Activated CD4-positive, alpha-beta memory T cell treated with anti-CD3 and anti-CD28 coated beads for 36 hours (primary cell): ENCODE measurements at regions of chr16 and their contacts with region 1.

Region 1: DNA sequence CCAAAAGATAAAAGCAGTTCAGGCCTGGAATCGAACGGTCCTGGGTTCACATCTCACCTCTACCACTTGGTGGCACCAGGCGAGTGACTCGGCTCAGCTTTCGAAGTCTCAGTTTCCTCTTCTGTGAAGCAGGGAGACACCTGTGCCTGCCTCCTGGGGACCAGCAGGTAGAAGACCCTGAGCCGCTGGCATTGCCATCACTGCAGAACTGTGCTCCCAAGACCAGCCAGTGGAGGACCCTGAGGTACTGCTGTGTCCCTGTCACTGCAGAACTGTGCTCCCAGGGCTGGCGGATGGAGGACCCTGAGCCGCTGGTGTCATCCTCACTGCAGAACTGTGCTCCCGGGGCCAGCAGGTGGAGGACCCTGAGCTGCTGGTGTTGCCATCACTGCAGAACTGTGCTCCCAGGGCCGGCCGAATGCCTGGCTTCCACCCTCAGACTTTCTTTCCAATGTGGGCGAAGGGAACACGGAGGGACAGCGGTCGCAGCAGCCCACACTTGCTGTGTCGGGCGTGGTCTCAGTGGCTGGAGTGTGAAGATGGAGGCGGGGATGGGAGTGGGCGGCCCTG is 8.7 kb upstream of the SLC7A5 start:
- DNase-seq: peak; percentile 68
- H3K4me3 Mint-ChIP-seq: no peak overlapping the region
- H3K27ac Mint-ChIP-seq: no peak overlapping the region
- H3K4me1 Mint-ChIP-seq: peaks cover 39% of the 10 kb centered on the region
- H3K27me3 Mint-ChIP-seq: peaks cover 2% of the 10 kb centered on the region

Region 2: DNA sequence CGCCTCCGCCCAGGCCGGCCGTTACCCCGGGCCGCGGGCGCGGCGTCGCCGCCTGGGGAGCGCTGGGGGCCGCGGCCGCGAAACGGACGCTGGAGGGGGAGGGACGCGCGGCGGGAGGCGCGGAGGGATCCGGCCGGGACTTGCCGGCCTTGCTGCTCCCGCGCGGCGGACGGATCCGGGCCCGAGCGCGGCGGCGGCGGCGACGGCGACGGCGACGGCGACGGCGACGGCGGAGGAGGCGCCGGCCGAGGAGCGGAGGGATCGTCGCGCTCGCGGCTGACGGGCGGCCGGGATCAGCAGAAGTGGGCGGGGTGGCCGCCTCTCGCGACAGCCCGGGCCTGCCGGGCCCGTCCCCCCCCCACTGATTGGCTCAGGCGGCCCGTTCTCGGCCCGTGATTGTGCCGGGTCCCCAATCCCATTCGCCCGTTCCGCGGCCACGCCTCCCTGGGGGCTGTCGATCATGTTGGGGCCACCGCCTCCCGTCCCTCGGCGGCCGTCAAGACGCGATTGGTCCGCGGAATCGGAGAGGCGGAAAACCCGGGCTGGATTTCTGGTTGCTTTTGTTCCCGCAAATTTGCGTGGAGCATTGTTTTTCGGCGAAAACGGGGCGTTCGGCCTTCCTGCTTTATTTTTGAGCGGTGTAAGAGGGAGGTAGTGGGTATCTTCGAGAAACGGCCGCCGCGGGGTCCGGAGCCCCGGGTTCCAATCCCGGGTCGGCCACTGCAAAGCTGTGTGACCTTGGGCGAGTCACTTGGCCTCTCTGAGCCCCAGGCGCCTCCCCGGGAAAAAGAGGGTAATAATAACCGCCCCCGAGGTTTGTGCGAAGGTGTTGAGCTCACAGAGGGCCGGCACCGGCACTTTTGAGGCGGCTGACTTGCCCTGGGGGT is 385.1 kb before region 1 on chr16 and contains the start of gene ZCCHC14:
- CTCF ChIA-PET with region 1: no interaction called
- POLR2A ChIA-PET with region 1: no interaction called
- intact Hi-C with region 1: loop called (anchors 10 kb)
- DNase-seq: peak; percentile 100
- H3K4me3 Mint-ChIP-seq: peak within 1 kb of the TSS; percentile 74
- H3K27ac Mint-ChIP-seq: peak within 1 kb of the TSS; percentile 55
- H3K4me1 Mint-ChIP-seq: peaks cover 48% of the 10 kb centered on the region
- H3K27me3 Mint-ChIP-seq: no peaks in the 10 kb centered on the region
- total RNA-seq, gene ZCCHC14: 8.7 to 10.6 TPM

Region 3: DNA sequence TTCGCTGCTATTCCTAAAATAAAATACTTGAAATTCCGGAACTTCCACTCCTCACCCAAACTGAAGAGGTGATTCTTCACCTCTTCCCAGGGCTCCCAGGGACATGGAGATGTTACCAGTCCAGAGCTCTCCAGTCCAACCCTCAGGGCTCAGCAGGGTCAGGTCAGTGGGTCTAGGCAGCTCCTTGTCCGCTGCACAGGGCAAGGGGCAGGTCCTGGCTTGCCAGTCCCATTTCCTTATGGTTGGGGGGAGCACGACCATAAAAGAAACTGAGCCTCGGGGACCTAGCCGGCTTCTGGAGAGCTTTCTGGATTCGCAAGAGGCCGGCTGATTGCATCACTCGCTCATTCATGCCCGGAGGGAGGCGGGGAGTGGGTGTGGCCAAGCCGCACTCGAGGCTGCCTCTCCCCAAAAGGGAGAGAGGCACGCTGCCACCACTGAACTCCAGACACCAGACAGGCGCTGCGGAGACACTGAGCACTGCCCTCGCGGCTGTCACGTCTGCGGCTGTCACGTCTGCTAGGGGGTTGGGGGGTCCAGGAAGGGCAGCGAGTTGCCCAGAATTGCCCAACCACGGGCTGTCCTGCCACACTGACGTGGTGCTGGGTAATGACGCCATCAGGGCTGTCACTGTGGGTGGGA is 24.5 kb before region 1 on chr16:
- CTCF ChIA-PET with region 1: interaction called, 224 read pairs
- POLR2A ChIA-PET with region 1: interaction called, 6 read pairs
- intact Hi-C with region 1: no loop called
- DNase-seq: peak; percentile 95
- H3K4me3 Mint-ChIP-seq: peak overlapping the region; percentile 53
- H3K27ac Mint-ChIP-seq: peak overlapping the region; percentile 88
- H3K4me1 Mint-ChIP-seq: peaks cover 60% of the 10 kb centered on the region
- H3K27me3 Mint-ChIP-seq: no peaks in the 10 kb centered on the region

Region 4: GRCh38 chr16:87895641-87896141 is 17.7 kb after region 1 on chr16:
- CTCF ChIA-PET with region 1: interaction called, 44 read pairs
- POLR2A ChIA-PET with region 1: interaction called, 65 read pairs
- intact Hi-C with region 1: loop called (anchors 1 kb)
- DNase-seq: peak; percentile 96
- H3K4me3 Mint-ChIP-seq: peak overlapping the region; percentile 58
- H3K27ac Mint-ChIP-seq: peak overlapping the region; percentile 99
- H3K4me1 Mint-ChIP-seq: peaks cover 51% of the 10 kb centered on the region
- H3K27me3 Mint-ChIP-seq: no peaks in the 10 kb centered on the region

Region 5: GRCh38 chr16:88452482-88453216 is 574.6 kb after region 1 on chr16:
- CTCF ChIA-PET with region 1: no interaction called
- POLR2A ChIA-PET with region 1: no interaction called
- intact Hi-C with region 1: loop called (anchors 10 kb)
- DNase-seq: peak; percentile 99
- H3K4me3 Mint-ChIP-seq: peak overlapping the region; percentile 80
- H3K27ac Mint-ChIP-seq: peak overlapping the region; percentile 84
- H3K4me1 Mint-ChIP-seq: peaks cover 25% of the 10 kb centered on the region
- H3K27me3 Mint-ChIP-seq: no peaks in the 10 kb centered on the region